ENCODE measurements at regions of chr6 and their contacts with region 1.

Region 1: DNA sequence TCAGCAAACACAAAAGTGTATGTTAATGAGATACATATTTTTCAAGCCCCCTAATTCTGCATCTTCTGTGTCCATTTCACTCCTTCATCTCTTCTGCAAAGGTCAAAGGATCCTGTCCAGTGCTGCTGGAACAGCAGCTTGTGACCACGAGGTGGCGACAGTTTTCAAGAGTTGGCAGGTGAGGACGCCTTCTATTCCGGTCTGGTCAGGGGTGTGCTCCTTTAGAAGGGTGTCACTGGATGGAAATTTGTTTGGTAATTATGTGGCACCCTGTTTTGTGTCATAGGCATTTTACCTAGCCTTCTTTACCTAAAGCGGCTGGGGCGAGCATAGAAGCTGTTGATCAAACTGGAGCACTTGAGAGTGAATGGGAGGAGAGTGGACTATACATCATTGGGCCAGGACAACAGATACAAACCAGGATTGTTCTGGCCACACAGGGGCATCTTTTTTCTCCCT is 32.9 kb upstream of the ERVFRD-1 start:
- DNase-seq: peak; percentile 77 to 85
- H3K4me3 ChIP-seq: no peak overlapping the region
- H3K27ac ChIP-seq: no peak overlapping the region
- H3K4me1 ChIP-seq: no peaks in the 10 kb centered on the region
- H3K27me3 ChIP-seq: no peaks in the 10 kb centered on the region
- CTCF ChIP-seq: peak; percentile 69 to 99 (median 90)
- POLR2A ChIP-seq: no peak

Region 2: DNA sequence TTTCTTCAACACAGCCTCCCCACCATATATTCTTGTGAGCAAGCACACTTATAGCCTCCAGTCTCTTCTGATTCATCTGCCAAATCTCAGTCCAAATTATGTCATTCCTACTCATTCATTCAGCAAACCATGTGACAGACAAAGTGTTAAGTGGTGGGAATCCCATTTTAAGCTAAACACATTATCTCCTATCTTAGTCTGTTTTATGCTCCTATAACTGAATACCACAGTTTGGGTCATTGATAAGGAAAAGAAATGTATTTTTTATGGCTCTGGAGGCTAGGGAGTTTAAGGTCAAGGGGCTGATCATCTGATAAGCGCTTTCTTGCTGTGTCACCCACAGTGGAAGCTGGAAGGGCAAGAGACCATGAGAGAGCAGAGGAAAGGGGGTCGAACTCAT is 74.7 kb before region 1 on chr6:
- intact Hi-C with region 1: no loop called
- DNase-seq: no peak
- H3K4me3 ChIP-seq: no peak overlapping the region
- H3K27ac ChIP-seq: no peak overlapping the region
- H3K4me1 ChIP-seq: no peaks in the 10 kb centered on the region
- H3K27me3 ChIP-seq: no peaks in the 10 kb centered on the region
- CTCF ChIP-seq: no peak
- POLR2A ChIP-seq: no peak

Region 3: GRCh38 chr6:11270030-11271027 is 125.9 kb after region 1 on chr6:
- intact Hi-C with region 1: no loop called
- DNase-seq: no peak
- H3K4me3 ChIP-seq: no peak overlapping the region
- H3K27ac ChIP-seq: peak overlapping the region in 1 of 3 donors; percentile 47
- H3K4me1 ChIP-seq: peaks cover 11 to 25% of the 10 kb centered on the region in 2 donors
- H3K27me3 ChIP-seq: no peaks in the 10 kb centered on the region
- CTCF ChIP-seq: no peak
- POLR2A ChIP-seq: no peak

Region 4: GRCh38 chr6:11496152-11497060 is 352.0 kb after region 1 on chr6:
- intact Hi-C with region 1: loop called (anchors 2 kb)
- DNase-seq: peak; percentile 55 to 64
- H3K4me3 ChIP-seq: no peak overlapping the region
- H3K27ac ChIP-seq: peak overlapping the region in 2 of 3 donors; percentile 1 to 49
- H3K4me1 ChIP-seq: peaks cover 18 to 27% of the 10 kb centered on the region in 2 donors
- H3K27me3 ChIP-seq: no peaks in the 10 kb centered on the region
- CTCF ChIP-seq: peak; percentile 72 to 100 (median 92)
- POLR2A ChIP-seq: no peak

Region 5: GRCh38 chr6:11575408-11576033 is 431.1 kb after region 1 on chr6:
- intact Hi-C with region 1: loop called (anchors 10 kb)
- DNase-seq: peak; percentile 58 to 64
- H3K4me3 ChIP-seq: no peak overlapping the region
- H3K27ac ChIP-seq: no peak overlapping the region
- H3K4me1 ChIP-seq: no peaks in the 10 kb centered on the region
- H3K27me3 ChIP-seq: no peaks in the 10 kb centered on the region
- CTCF ChIP-seq: peak; percentile 48 to 94 (median 89)
- POLR2A ChIP-seq: no peak

Measured in thyroid gland (tissue), 4 donors.